Activated T-helper 1 cell treated with anti-CD3 and anti-CD28 coated beads, Interleukin-12 subunit alpha, Interleukin-12 subunit beta, Interleukin-2, Interleukin-4 antibody, amounts not matched to agents 30 ng/mL and 10 ng/mL and 1 ng/mL, durations not matched to agents 14 hours and 24 hours and 36 hours (primary cell): ENCODE measurements at regions of chr5 and their contacts with region 1.

Region 1: GRCh38 chr5:43514816-43515677 is at the start of gene C5orf34:
- DNase-seq: peak; percentile 92
- H3K4me3 Mint-ChIP-seq: peak within 1 kb of the TSS; percentile 94
- H3K27ac Mint-ChIP-seq: peak within 1 kb of the TSS; percentile 97
- H3K4me1 Mint-ChIP-seq: peaks cover 32% of the 10 kb centered on the region
- H3K27me3 Mint-ChIP-seq: peaks cover 2% of the 10 kb centered on the region
- total RNA-seq, gene C5orf34: 5.3 and 5.5 TPM in 2 replicates

Region 2: DNA sequence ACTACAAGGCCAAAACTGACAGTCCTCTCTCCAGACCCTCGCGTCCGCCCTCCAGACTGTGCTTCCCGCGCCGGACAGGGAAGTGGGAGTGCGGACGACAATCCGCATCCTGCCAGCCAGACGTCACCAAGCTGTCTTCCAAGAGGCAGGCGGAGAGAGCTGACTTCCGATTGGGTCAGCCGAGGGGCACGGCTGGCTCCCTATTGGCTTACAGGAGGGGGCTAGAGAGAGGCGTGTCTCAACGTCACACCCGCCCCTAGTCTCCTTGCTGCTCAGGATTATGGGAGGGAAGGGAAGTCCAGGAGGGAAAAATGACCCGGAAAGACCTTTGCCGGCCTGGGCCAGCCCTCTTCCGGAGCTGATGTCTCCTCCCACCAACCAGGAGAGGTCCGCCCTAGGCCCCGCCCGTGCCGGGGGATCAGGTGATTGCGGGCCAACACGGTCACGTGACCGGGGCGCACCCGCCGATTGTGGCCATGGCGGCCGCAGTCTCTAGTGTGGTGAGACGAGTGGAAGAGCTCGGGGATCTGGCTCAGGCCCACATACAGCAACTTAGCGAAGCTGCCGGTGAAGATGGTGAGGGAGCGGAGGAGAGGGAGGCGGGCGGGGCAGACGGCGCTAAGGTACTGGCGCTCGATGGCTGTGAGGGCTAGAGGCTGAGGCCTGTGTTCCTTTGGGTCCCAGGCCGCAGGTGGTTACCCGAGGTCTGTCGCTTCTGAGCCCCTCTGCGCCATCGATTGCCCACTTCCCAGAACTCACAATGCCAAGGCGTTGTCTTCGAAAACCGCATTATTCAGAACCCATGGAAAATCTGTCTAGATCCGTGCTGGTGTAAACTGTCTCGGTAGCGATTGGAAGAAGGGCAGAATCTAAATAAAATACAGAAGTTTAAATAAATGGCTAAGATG is 1610.9 kb before region 1 on chr5 and contains the start of gene RIMOC1:
- intact Hi-C with region 1: loop called (anchors 10 kb)
- DNase-seq: peak; percentile 98
- H3K4me3 Mint-ChIP-seq: peak within 1 kb of the TSS; percentile 99
- H3K27ac Mint-ChIP-seq: peak within 1 kb of the TSS; percentile 100
- H3K4me1 Mint-ChIP-seq: peaks cover 54% of the 10 kb centered on the region
- H3K27me3 Mint-ChIP-seq: peaks cover 10% of the 10 kb centered on the region
- total RNA-seq, gene RIMOC1: 28.0 and 29.0 TPM in 2 replicates

Region 3: GRCh38 chr5:43191740-43192557 is 323.1 kb before region 1 on chr5 and contains the start of gene NIM1K:
- intact Hi-C with region 1: loop called (anchors 1 kb)
- DNase-seq: peak; percentile 39
- H3K4me3 Mint-ChIP-seq: peak within 1 kb of the TSS; percentile 85
- H3K27ac Mint-ChIP-seq: peak within 1 kb of the TSS; percentile 89
- H3K4me1 Mint-ChIP-seq: peaks cover 40% of the 10 kb centered on the region
- H3K27me3 Mint-ChIP-seq: peaks cover 22% of the 10 kb centered on the region
- total RNA-seq, gene NIM1K: 0.39 and 0.67 TPM in 2 replicates

Region 4: GRCh38 chr5:43305948-43306565 is 209.0 kb before region 1 on chr5:
- intact Hi-C with region 1: loop called (anchors 2 kb)
- DNase-seq: no peak
- H3K4me3 Mint-ChIP-seq: peak overlapping the region; percentile 33
- H3K27ac Mint-ChIP-seq: peak overlapping the region; percentile 61
- H3K4me1 Mint-ChIP-seq: peaks cover 87% of the 10 kb centered on the region
- H3K27me3 Mint-ChIP-seq: no peaks in the 10 kb centered on the region

Region 5: DNA sequence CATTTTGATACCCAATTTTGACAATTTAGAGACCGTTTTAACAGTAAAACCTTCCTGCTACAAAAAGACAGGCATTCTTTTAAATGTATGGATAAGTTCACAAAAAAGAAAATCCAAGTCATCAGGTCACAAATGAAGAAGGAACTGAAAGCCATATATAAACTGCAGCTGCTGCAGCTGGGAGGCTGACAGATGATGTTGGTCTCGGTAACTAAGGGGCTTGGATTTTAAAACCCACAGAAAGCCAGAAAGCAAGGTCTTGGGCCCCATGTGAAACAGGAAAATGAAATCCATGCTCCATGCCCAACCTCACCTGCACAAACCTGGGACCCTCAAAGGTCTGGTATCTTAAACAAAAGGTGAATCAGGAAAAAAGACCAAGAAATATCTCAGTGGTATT is 15.6 kb after region 1 on chr5:
- intact Hi-C with region 1: loop called (anchors 1 kb)
- DNase-seq: no peak
- H3K4me3 Mint-ChIP-seq: no peak overlapping the region
- H3K27ac Mint-ChIP-seq: no peak overlapping the region
- H3K4me1 Mint-ChIP-seq: peaks cover 23% of the 10 kb centered on the region
- H3K27me3 Mint-ChIP-seq: no peaks in the 10 kb centered on the region

Region 6: GRCh38 chr5:43556857-43557542 is 42.0 kb after region 1 on chr5 and contains the start of gene PAIP1:
- intact Hi-C with region 1: loop called (anchors 1 kb)
- DNase-seq: peak; percentile 83
- H3K4me3 Mint-ChIP-seq: peak within 1 kb of the TSS; percentile 92
- H3K27ac Mint-ChIP-seq: peak within 1 kb of the TSS; percentile 93
- H3K4me1 Mint-ChIP-seq: peaks cover 10% of the 10 kb centered on the region
- H3K27me3 Mint-ChIP-seq: no peaks in the 10 kb centered on the region
- total RNA-seq, gene PAIP1: 59.0 and 60.8 TPM in 2 replicates

Region 7: GRCh38 chr5:43602461-43603343 is 87.7 kb after region 1 on chr5 and contains the start of gene NNT:
- intact Hi-C with region 1: loop called (anchors 1 kb)
- DNase-seq: peak; percentile 76
- H3K4me3 Mint-ChIP-seq: peak within 1 kb of the TSS; percentile 91
- H3K27ac Mint-ChIP-seq: peak within 1 kb of the TSS; percentile 91
- H3K4me1 Mint-ChIP-seq: peaks cover 34% of the 10 kb centered on the region
- H3K27me3 Mint-ChIP-seq: no peaks in the 10 kb centered on the region
- total RNA-seq, gene NNT: 43.6 and 47.5 TPM in 2 replicates